Motor neuron (in vitro differentiated cells): ENCODE measurements at regions of chr20 and their contacts with region 1.

Region 1: GRCh38 chr20:32779500-32780211 is 17.5 kb downstream of the DNMT3B start:
- ATAC-seq: peak in 6 of 8 experiments; percentile 26 to 84 (median 82)
- H3K4me3 ChIP-seq: peak overlapping the region in 4 of 5 donors; percentile 12 to 20 (median 18)
- H3K27ac ChIP-seq: peak overlapping the region; percentile 74 to 82
- H3K4me1 ChIP-seq: peaks cover 34 to 39% of the 10 kb centered on the region in 2 donors

Region 2: DNA sequence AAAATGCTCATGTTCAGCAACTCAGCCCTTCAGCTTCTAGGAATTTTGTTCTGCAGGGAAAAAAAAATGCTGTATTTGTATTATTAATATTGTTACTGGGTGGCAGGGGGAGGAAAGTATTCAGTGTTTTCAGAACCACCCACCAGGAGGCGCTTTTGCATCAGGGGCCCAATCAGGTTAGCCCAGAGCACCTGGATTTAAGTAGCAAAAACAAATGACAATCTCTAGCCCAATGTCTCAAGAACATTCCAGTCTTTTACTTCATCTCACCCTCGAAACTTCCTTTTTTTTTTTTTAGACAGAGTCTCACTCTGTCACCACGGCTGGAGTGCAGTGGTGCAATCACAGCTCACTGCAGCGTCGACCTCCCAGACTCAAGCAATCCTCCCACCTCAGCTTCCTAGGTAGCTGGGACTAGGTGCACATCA is 105.3 kb before region 1 on chr20:
- in situ Hi-C with region 1: loop called in 1 of 9 experiments (anchors 10 kb)
- ATAC-seq: peak in 3 of 8 experiments; percentile 69 to 73 (median 70)
- H3K4me3 ChIP-seq: no peak overlapping the region
- H3K27ac ChIP-seq: peak overlapping the region in 1 of 2 donors; percentile 14
- H3K4me1 ChIP-seq: peaks cover 15 to 27% of the 10 kb centered on the region in 2 donors